Activated CD4-positive, alpha-beta T cell treated with anti-CD3 and anti-CD28 coated beads, Interleukin-2, amount 10 ng/mL, durations not matched to agents 24 days and 14 days (primary cell): ENCODE measurements at regions of chr18 and their contacts with region 1.

Region 1: DNA sequence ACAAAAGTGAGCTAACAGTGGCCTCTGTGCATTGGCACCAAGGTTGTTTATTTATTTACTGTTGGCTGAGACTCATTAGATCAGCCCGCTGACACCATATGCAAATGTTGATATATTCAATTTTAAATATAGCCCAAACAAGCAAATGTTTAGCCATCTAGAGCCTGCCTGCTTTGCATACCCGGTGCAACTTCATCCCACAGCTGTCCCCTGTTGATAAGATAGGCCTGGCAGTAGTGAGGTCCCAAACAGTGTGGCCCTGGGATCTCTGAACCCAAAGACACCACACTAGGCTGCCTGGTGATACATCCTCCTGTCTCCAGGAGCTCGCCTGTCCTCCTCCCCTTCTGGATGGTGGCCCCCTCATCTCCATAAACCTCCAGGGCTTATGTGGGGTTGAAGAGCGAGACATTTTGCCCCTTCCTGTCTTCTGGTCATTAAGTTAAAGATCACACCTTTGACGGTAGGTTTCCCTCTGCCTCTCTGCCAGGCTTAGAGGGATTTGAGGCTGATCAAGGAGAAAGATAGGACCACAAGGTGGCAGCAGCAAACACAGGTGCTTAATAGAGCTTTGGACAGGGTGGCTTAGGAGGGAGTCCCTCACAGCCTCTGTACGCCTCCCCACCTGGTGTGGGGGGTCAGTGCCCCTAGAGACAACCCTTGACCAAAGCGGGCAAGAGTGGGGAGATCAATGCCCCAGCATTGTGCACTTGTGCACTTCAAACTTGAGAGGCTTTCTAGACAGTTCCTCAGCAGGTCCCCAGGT is 23.7 kb upstream of the MYO5B start:
- DNase-seq: peak; percentile 82
- H3K4me3 Mint-ChIP-seq: no peak overlapping the region
- H3K27ac Mint-ChIP-seq: no peak overlapping the region
- H3K4me1 Mint-ChIP-seq: no peaks in the 10 kb centered on the region
- H3K27me3 Mint-ChIP-seq: peaks cover 31% of the 10 kb centered on the region

Region 2: GRCh38 chr18:50266248-50266704 is 47.7 kb after region 1 on chr18 and contains the start of gene CFAP53:
- intact Hi-C with region 1: loop called (anchors 1 kb)
- DNase-seq: peak; percentile 95
- H3K4me3 Mint-ChIP-seq: peak within 1 kb of the TSS; percentile 83
- H3K27ac Mint-ChIP-seq: peak within 1 kb of the TSS; percentile 78
- H3K4me1 Mint-ChIP-seq: peaks cover 20% of the 10 kb centered on the region
- H3K27me3 Mint-ChIP-seq: peaks cover 6% of the 10 kb centered on the region
- total RNA-seq, gene CFAP53: 0.38 and 0.63 TPM in 2 replicates